Dorsolateral prefrontal cortex (tissue), 120 donors: ENCODE measurements at regions of chr16 and their contacts with region 1.

Region 1: GRCh38 chr16:21708533-21709115 is 44.9 kb downstream of the OTOA start:
- DNase-seq: peak; percentile 51 to 85 (median 64)
- H3K4me3 ChIP-seq: peak overlapping the region in 5 of 59 donors; percentile 6 to 28 (median 12)
- H3K27ac ChIP-seq: no peak overlapping the region
- H3K27me3 ChIP-seq: no peaks in the 10 kb centered on the region
- CTCF ChIP-seq: peak; percentile 74 to 93 (median 84)

Region 2: DNA sequence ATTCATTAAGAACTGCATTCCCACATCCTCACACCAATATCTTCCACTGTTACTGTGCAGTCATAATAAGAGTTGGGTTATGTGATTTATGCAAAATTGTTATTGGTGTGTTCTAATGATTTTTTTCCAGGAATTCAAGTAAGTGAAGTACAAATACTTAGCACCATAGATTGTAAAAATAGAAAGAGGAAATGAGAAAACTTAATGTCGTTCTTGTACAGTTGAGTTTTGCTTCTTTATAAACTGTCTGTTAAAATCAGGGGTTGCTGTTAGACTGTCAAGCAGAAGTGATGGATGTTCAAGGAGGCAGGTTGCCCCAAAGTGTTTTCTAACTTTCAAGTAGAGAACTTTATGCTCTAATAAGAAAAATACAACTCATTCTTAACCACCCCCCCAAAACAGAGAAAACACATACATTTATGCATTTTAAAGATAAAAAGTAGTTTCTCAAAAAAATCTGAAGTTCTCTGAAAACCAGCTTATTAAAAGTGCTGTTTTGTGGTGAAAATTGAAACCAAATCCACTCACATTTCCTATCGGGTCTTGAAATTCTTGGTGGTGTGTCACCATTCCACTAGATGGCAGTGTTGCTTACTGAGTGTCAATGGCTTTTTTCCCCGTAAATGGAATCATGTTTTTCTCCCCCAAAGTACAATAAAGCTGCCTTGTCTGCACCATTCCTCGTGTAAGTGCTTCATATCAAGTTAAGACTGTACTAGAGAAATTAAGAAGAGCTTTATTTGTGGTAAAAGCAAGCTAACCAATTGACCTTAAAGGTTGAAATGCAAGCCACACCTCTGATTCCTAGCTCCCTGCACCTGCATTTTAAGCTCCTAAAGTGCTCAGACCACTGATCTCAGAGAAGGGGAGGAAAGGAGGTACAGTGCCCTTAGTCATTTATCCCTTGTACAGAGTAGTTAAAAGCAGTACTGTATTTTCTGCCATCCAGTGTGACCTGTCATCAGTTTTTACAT is 51.5 kb before region 1 on chr16:
- intact Hi-C with region 1: loop called (anchors 5 kb)
- DNase-seq: peak in 2 of 10 donors; percentile 26 to 46
- H3K4me3 ChIP-seq: no peak overlapping the region
- H3K27ac ChIP-seq: peak overlapping the region in 16 of 59 donors; percentile 4 to 40 (median 20)
- H3K27me3 ChIP-seq: no peaks in the 10 kb centered on the region
- CTCF ChIP-seq: peak; percentile 72 to 95 (median 89)

Region 3: DNA sequence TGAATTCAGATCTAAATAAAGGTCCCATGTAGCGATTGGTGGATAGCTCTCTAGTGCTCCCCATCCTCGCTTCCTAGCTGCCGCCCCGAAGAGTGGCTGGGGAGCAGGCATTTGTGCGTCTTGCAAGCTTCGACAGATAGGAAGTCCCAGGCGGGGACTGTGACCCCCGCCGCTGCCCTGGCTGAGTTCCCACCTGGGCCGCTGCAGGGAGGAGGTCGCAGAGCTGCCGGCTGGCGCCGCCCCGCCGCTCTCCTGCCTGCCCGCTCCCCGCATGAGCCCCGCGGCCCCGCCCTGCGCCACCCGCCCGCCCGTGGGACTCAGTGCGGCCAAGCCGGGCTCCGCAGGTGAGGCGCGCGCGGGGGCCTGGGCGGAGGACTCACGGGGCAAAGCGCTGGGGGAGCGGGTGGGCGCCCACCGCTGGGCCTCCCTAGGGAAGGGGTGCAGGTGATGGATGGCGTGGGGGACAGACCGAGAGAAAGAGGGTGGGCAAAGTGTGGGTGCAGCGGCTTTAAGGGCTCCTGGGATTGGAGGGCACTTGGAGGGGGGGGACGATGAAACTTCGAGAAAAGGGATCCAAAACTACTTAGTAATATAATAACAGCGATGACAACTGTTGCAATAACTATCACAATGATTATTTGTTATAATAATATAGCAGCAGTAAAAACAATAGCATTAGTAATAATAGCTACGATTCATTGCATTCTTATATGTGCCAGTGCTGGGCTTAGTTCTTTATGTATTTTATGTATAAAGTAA is 44.6 kb before region 1 on chr16 and contains the start of gene OTOA:
- intact Hi-C with region 1: loop called (anchors 5 kb)
- DNase-seq: peak in 3 of 10 donors; percentile 4 to 52 (median 24)
- H3K4me3 ChIP-seq: peak within 1 kb of the TSS in 58 of 59 donors; percentile 7 to 68 (median 50)
- H3K27ac ChIP-seq: no peak within 1 kb of the TSS
- H3K27me3 ChIP-seq: peaks cover 0 to 12% (median 0%) of the 10 kb centered on the region in 45 donors
- CTCF ChIP-seq: no peak
- total RNA-seq, gene OTOA: 0.30 to 2.7 (median 1.2) TPM